ENCODE measurements at regions of chr7 and their contacts with region 1.

Region 1: DNA sequence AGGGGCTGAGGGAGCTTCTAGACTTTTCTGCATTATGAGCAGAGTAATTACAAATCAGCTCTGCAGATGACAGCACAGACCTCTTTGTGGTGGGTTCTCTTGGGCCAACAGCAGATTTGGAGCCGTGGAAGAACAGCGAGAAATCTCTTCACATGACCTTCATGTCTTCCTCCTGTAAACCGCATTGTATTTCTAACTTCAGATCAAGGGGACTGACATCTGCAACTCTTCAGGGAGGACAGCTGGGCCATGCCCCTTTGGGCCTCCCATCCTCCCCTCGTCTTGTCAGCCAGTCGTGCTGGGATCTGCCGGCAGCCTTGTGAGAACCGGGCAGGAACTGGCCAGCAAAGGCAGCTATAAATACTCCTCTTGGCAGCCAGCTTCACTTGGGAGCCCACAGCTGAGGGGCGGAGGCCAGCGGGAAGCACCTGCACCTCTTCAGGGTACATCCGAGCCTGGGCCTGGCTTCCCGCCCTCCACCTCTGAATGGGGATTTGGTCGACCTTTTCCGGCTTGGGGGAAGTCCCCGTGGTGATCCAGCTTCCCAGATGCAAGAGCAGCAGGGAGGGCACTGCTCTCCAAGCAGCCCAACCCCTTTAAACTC is 54.7 kb downstream of the STEAP1B start:
- DNase-seq: peak; percentile 88
- H3K4me3 Mint-ChIP-seq: peak overlapping the region; percentile 63
- H3K27ac Mint-ChIP-seq: peak overlapping the region; percentile 88
- H3K4me1 Mint-ChIP-seq: peaks cover 65% of the 10 kb centered on the region
- H3K27me3 Mint-ChIP-seq: no peaks in the 10 kb centered on the region
- CTCF ChIP-seq: no peak

Region 2: GRCh38 chr7:22350466-22351328 is 94.5 kb before region 1 on chr7:
- CTCF ChIA-PET with region 1: interaction called, 11 read pairs
- intact Hi-C with region 1: loop called (anchors 1 kb)
- DNase-seq: no peak
- H3K4me3 Mint-ChIP-seq: peak overlapping the region; percentile 64
- H3K27ac Mint-ChIP-seq: peak overlapping the region; percentile 84
- H3K4me1 Mint-ChIP-seq: peaks cover 75% of the 10 kb centered on the region
- H3K27me3 Mint-ChIP-seq: no peaks in the 10 kb centered on the region
- CTCF ChIP-seq: no peak

Region 3: GRCh38 chr7:22356701-22357353 is 88.4 kb before region 1 on chr7 and contains the start of gene RAPGEF5:
- CTCF ChIA-PET with region 1: interaction called, 11 read pairs
- intact Hi-C with region 1: no loop called
- DNase-seq: peak; percentile 80
- H3K4me3 Mint-ChIP-seq: peak within 1 kb of the TSS; percentile 82
- H3K27ac Mint-ChIP-seq: peak within 1 kb of the TSS; percentile 70
- H3K4me1 Mint-ChIP-seq: peaks cover 62% of the 10 kb centered on the region
- H3K27me3 Mint-ChIP-seq: no peaks in the 10 kb centered on the region
- CTCF ChIP-seq: no peak
- total RNA-seq, gene RAPGEF5: 108 and 128 TPM in 2 replicates

Region 4: DNA sequence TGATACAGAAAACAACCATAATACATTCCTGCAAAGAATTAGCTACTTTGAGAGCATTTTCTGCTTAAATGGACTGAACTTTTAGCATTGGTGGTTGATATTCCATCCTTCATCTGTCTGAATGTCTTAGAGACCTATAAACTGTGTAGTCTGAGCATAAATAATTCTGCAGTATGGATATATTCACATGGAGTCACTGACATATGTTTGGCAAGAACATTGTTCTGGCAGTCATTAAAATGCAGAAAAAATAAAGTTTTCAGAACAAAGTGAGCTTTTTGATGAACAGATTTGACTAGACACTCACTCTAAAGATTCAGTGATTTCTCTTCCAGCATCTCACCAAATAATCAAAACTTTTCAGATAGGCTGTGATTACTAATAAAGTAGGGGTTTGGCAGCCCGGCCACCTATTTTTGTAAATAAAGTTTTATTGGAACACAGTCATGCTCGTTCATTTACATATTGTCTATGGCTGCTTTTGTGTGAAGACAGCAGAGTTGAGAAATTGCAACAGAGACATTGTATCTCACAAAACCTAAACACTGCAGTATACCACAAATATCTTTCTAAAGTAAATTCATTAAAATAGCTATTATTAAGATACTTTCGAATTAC is 44.2 kb before region 1 on chr7:
- CTCF ChIA-PET with region 1: interaction called, 3 read pairs
- intact Hi-C with region 1: loop called (anchors 1 kb)
- DNase-seq: no peak
- H3K4me3 Mint-ChIP-seq: no peak overlapping the region
- H3K27ac Mint-ChIP-seq: no peak overlapping the region
- H3K4me1 Mint-ChIP-seq: peaks cover 22% of the 10 kb centered on the region
- H3K27me3 Mint-ChIP-seq: no peaks in the 10 kb centered on the region
- CTCF ChIP-seq: no peak

Region 5: GRCh38 chr7:22581099-22581498 is 135.9 kb after region 1 on chr7:
- CTCF ChIA-PET with region 1: no interaction called
- intact Hi-C with region 1: no loop called
- DNase-seq: no peak
- H3K4me3 Mint-ChIP-seq: no peak overlapping the region
- H3K27ac Mint-ChIP-seq: no peak overlapping the region
- H3K4me1 Mint-ChIP-seq: peaks cover 87% of the 10 kb centered on the region
- H3K27me3 Mint-ChIP-seq: no peaks in the 10 kb centered on the region
- CTCF ChIP-seq: no peak

Region 6: GRCh38 chr7:22647451-22648257 is 202.4 kb after region 1 on chr7:
- CTCF ChIA-PET with region 1: no interaction called
- intact Hi-C with region 1: no loop called
- DNase-seq: no peak
- H3K4me3 Mint-ChIP-seq: peak overlapping the region; percentile 4
- H3K27ac Mint-ChIP-seq: peak overlapping the region; percentile 71
- H3K4me1 Mint-ChIP-seq: peaks cover 39% of the 10 kb centered on the region
- H3K27me3 Mint-ChIP-seq: no peaks in the 10 kb centered on the region
- CTCF ChIP-seq: no peak

Measured in Calu3 (cell line).